ENCODE measurements at regions of chr3 and their contacts with region 1.

Region 1: DNA sequence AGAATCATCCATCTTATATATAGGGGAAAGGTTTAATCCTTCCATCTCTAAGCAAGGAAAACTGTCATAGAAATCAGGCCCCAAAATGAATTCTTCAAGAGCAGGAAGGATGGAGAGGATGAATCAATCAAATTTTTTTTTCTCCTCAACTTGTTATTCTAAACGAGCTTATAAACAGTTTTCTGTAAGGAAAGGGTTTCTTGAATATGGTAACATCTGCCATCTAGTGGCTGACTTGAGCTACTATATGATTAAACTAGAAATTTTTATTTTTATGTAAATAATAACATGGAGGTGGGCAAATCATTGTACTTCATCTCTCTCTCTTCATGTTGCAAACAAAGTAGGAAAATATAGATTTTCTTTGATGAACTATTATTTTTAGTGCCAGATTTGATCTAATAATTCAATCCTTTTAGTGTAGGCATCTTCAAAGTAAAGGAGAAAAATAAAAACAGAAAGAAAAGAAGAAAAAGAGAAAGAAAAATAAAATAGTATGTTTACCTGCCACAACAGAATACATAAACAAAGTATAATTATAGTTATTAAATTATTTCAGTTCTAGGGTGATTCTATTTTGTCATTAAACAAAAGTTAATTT is 146.6 kb downstream of the SERPINI1 start:
- H3K4me3 Mint-ChIP-seq: no peak overlapping the region
- H3K27ac Mint-ChIP-seq: no peak overlapping the region
- H3K4me1 Mint-ChIP-seq: peaks cover 4% of the 10 kb centered on the region
- H3K27me3 Mint-ChIP-seq: peaks cover 3% of the 10 kb centered on the region

Region 2: GRCh38 chr3:167380004-167380689 is 502.0 kb before region 1 on chr3 and contains the start of gene ZBBX:
- intact Hi-C with region 1: loop called (anchors 10 kb)
- H3K4me3 Mint-ChIP-seq: peak within 1 kb of the TSS; percentile 78
- H3K27ac Mint-ChIP-seq: peak within 1 kb of the TSS; percentile 28
- H3K4me1 Mint-ChIP-seq: peaks cover 11% of the 10 kb centered on the region
- H3K27me3 Mint-ChIP-seq: peaks cover 10% of the 10 kb centered on the region

Region 3: GRCh38 chr3:167743795-167744194 is 138.4 kb before region 1 on chr3:
- intact Hi-C with region 1: no loop called
- H3K4me3 Mint-ChIP-seq: no peak overlapping the region
- H3K27ac Mint-ChIP-seq: no peak overlapping the region
- H3K4me1 Mint-ChIP-seq: peaks cover 14% of the 10 kb centered on the region
- H3K27me3 Mint-ChIP-seq: no peaks in the 10 kb centered on the region

Region 4: DNA sequence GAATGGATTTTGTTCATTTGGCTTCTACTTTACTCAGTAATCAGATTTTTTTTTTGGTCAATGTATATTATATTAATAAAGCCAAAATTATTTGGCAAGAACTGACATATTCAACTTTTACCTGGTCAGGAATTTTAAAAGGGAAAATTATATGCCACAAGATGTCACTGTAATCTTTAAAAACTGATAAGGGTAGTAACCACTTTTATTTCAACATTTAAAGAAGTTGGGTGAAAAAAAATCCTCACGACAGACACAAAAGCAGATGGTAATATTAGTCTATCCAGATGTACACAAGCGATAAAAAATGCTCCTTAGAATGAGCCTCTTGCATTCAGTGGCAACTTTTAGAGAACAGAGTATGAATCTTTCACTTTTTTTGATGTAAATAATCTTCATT is 44.7 kb before region 1 on chr3:
- intact Hi-C with region 1: loop called (anchors 1 kb)
- H3K4me3 Mint-ChIP-seq: no peak overlapping the region
- H3K27ac Mint-ChIP-seq: peak overlapping the region; percentile 28
- H3K4me1 Mint-ChIP-seq: peaks cover 6% of the 10 kb centered on the region
- H3K27me3 Mint-ChIP-seq: no peaks in the 10 kb centered on the region